Panc1 (cell line): ENCODE measurements at regions of chr1 and their contacts with region 1.

Region 1: DNA sequence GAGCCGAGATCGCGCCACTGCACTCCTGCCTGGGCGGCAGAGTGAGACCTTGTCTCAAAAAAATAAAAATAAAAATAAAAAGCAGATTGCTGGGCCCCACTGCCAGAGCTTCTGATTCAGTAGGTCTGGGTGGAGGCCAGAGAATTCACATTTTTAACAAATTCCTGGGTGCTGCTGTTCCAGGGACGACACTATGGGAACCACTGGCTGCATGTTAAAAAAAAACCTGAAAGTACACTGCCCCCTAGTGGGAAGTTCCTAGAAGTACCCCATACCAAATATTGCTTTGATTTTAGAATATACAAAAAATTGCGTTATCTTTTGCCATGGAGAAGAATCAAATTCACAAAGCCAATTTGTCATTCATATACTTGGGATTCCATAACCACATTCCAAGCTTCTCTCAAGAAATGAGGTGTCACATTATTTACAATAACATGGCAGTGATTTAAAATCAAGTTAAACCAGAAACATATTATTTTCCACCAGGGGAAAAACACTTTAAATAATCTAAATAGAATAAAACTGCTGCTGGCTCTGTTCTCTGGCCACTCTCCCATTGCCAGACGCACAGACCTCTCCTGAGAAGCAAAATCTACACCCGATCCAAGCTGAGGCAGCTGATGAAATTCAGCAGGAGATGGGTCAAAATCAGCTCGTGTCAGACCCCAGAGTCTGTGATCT is 27.4 kb downstream of the SYF2 start:
- DNase-seq: no peak
- ATAC-seq: no peak
- H3K4me3 ChIP-seq: no peak overlapping the region
- H3K27ac ChIP-seq: no peak overlapping the region
- H3K4me1 ChIP-seq: no peaks in the 10 kb centered on the region
- H3K27me3 ChIP-seq: no peaks in the 10 kb centered on the region
- CTCF ChIP-seq: peak; percentile 82

Region 2: GRCh38 chr1:24872061-24872850 is 332.7 kb before region 1 on chr1:
- CTCF ChIA-PET with region 1: no interaction called
- POLR2A ChIA-PET with region 1: no interaction called
- in situ Hi-C with region 1: no loop called
- intact Hi-C with region 1: no loop called
- DNase-seq: no peak
- ATAC-seq: no peak
- H3K4me3 ChIP-seq: no peak overlapping the region
- H3K27ac ChIP-seq: no peak overlapping the region
- H3K4me1 ChIP-seq: no peaks in the 10 kb centered on the region
- H3K27me3 ChIP-seq: no peaks in the 10 kb centered on the region
- CTCF ChIP-seq: no peak

Region 3: DNA sequence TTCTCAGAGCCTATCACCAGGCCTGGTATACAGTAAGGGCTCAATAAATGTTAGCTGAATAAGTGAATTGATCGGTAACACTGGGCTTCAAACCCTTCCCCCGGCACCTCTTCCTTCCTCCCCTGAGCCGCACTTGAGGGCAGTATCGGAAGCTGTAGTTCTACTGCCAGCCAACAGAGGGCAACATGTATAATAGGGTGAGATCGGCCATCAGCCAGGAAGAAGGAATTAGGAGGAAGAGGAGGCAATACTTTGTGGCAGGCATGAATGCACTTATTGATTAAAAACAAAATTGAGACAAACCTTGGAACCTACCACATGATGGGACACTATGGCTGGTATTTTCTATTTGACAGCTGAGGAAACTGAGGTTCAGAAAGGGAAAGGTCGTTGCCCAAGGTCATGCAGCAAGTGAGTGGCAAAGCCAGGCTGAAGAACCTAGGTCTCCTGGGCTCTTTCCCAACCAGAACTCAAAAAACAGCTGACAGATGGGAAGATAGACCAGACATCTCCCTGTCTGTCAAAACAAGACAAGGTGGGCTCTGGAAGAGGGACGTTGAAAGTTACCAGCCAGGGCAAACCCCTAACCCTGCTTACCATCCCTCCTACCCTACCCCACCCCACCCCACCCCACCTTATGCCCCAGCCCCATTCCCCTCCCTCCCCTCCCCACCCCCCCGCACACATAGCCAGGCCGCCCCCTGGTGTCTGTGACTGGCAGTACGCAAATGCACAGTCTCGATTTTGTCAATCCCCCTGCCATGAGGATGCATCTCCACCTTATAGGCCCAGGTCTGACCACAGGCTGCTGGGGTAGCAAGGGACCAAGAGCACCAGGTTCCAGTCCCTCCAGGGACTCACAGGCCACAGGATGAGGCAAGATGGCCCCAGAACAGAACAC is 167.5 kb before region 1 on chr1:
- CTCF ChIA-PET with region 1: interaction called, 7 read pairs
- POLR2A ChIA-PET with region 1: interaction called, 3 read pairs
- in situ Hi-C with region 1: no loop called
- intact Hi-C with region 1: loop called (anchors 5 kb)
- DNase-seq: peak; percentile 13
- ATAC-seq: peak; percentile 61
- H3K4me3 ChIP-seq: no peak overlapping the region
- H3K27ac ChIP-seq: no peak overlapping the region
- H3K4me1 ChIP-seq: no peaks in the 10 kb centered on the region
- H3K27me3 ChIP-seq: no peaks in the 10 kb centered on the region
- CTCF ChIP-seq: peak; percentile 83

Region 4: DNA sequence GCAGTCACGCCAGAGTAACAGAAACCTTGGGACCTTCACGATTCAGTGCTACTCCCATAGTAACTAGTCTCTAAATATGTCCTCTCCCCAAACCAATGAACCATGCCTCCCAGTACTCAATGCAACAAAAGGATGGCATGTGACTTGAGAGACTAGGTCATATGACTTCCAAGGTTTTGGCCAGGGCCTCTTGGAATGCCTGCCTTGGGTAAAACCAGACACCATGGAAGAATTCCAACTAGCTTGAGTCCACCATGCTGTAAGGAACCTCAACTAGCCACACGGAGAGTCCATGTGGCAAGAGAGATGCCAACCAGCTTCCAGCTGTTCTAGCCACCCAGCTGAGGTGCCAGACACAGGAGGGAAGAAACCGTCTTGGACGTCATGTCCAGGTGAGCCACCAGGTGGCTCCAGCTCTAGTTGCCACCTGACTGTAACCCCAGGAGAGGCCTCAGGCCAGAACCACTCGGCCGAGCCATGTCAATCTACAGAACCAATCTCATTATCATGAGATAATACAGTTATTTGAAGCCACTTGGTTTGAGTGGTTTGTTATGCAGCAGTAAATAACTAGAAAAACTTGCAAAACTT is 87.6 kb before region 1 on chr1:
- CTCF ChIA-PET with region 1: interaction called, 3 read pairs
- POLR2A ChIA-PET with region 1: no interaction called
- in situ Hi-C with region 1: no loop called
- intact Hi-C with region 1: loop called (anchors 10 kb)
- DNase-seq: no peak
- ATAC-seq: peak; percentile 68; the same call in 1 of the 2 replicates
- H3K4me3 ChIP-seq: no peak overlapping the region
- H3K27ac ChIP-seq: no peak overlapping the region
- H3K4me1 ChIP-seq: no peaks in the 10 kb centered on the region
- H3K27me3 ChIP-seq: no peaks in the 10 kb centered on the region; the same call in 1 of the 2 replicates
- CTCF ChIP-seq: no peak; the same call in 1 of the 2 replicates

Region 5: DNA sequence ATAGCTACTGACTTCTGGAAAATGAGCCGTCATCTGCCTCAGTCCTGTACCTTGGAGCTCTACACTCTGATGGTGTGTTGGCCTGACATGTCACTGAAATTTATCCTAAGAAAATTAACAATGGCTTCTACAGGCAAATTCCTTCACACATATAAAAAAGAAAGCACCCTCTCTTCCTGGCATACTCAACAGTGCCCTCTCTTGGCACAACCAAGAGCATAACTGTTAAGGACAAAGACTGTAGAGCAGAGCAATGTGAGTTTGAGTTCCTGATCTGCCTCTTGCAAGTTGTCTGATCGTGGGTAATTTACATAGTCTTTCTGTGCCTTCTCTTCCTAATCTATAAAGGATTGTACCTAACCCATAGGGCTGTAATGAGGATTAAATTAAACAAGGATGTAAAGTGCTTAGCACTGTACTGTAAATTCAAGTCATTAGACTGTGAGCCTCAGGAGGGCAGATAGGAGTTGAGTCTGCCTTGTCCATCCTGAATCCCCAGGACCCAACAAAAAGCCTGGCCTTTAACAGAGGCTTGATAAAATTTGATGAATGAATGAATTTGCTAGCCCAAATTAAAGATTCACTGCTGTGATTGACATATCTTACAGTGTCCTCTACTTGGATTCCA is 56.2 kb before region 1 on chr1:
- CTCF ChIA-PET with region 1: no interaction called
- POLR2A ChIA-PET with region 1: interaction called, 14 read pairs
- in situ Hi-C with region 1: no loop called
- intact Hi-C with region 1: no loop called
- DNase-seq: peak; percentile 7
- ATAC-seq: no peak
- H3K4me3 ChIP-seq: no peak overlapping the region
- H3K27ac ChIP-seq: no peak overlapping the region
- H3K4me1 ChIP-seq: no peaks in the 10 kb centered on the region
- H3K27me3 ChIP-seq: peaks cover 10% of the 10 kb centered on the region
- CTCF ChIP-seq: peak; percentile 16

Region 6: GRCh38 chr1:25217598-25218232 is 12.8 kb after region 1 on chr1:
- CTCF ChIA-PET with region 1: interaction called, 11 read pairs
- POLR2A ChIA-PET with region 1: interaction called, 4 read pairs
- in situ Hi-C with region 1: no loop called
- intact Hi-C with region 1: no loop called
- DNase-seq: no peak
- ATAC-seq: 0 out of 2 replicates have a peak, but pooled peaks have one; percentile 43
- H3K4me3 ChIP-seq: no peak overlapping the region
- H3K27ac ChIP-seq: no peak overlapping the region
- H3K4me1 ChIP-seq: no peaks in the 10 kb centered on the region
- H3K27me3 ChIP-seq: no peaks in the 10 kb centered on the region
- CTCF ChIP-seq: no peak